GM10248 (cell line): ENCODE measurements at regions of chr20 and their contacts with region 1.

Region 1: GRCh38 chr20:815914-816606 is 17.5 kb upstream of the FAM110A start:
- DNase-seq: peak; percentile 77
- CTCF ChIP-seq: peak; percentile 89

Region 2: DNA sequence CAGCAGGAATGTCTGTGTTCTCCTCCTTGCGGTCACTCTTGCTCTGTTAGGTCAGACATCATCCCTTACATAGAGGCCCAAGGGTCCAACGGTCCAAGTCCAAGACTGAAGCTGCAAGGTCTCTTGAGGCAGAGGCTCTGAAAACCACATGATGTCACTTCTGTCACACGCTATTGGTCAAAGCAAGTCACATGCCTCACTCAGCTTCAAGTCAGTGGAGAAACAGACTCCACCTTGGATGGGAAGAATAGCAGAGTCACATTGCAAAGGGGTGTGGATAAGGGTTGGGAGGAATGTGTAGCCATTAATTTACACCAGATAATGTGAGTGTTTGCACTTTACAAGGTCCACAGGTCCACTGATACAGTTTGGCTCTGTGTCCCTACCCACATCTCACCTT is 65.3 kb before region 1 on chr20:
- CTCF ChIA-PET with region 1: no interaction called
- POLR2A ChIA-PET with region 1: no interaction called
- DNase-seq: no peak
- CTCF ChIP-seq: no peak

Region 3: DNA sequence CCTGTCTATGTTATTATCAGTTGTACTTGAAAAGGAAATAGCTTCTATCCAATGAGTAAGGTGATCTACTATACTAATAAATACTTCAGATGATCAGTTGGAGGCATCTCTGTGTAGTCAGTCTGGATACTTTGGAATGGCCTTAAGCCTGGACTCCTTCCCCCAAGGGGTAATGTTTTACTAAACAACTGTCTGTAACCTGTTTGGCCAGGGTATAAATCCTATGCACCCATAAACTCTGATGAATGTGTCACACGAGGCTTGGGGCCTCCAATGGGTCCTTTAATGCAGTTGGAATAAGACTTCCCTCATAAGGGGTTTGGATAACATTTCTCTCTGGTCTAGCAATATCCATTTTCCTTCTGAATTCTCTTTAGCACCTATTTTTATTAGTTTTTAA is 28.2 kb before region 1 on chr20:
- CTCF ChIA-PET with region 1: no interaction called
- POLR2A ChIA-PET with region 1: no interaction called
- DNase-seq: no peak
- CTCF ChIP-seq: no peak

Region 4: DNA sequence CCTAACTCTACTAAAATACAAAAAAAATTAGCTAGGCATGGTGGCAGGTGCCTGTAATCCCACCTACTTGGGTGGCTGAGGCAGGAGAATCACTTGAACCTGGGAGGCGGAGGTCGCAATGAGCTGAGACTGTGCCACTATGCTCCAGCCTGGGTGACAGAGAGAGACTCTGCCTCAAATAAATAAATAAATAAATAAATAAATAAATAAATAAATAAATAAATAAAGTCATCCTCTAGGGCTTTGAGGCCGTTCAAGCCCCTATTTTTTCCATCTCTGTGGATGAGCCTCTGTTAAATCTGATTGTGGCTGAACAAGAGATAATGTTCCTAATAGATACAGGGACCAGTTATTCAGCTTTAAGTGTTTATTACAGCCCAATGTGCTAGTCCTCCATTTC is 14.4 kb before region 1 on chr20:
- CTCF ChIA-PET with region 1: interaction called, 10 read pairs
- POLR2A ChIA-PET with region 1: no interaction called
- DNase-seq: no peak
- CTCF ChIP-seq: no peak

Region 5: DNA sequence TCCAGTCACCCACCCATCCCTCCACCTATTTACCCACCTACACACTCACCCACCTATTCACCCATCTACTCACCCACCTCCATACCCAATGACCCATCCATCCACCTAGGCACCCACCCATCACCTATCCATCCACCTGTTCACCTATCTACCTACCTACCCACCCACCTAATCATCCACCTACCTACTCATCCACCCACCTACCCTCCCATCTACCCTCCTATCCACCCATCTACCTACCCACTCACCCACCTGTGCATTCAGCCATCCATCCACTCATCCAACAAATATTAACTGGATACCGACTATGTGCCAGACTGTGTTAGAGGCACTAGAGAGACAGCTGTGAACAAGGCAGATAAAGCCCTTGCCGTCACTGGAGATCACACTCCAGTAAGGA is 145.7 kb after region 1 on chr20:
- CTCF ChIA-PET with region 1: interaction called, 231 read pairs
- POLR2A ChIA-PET with region 1: no interaction called
- DNase-seq: no peak
- CTCF ChIP-seq: no peak

Region 6: DNA sequence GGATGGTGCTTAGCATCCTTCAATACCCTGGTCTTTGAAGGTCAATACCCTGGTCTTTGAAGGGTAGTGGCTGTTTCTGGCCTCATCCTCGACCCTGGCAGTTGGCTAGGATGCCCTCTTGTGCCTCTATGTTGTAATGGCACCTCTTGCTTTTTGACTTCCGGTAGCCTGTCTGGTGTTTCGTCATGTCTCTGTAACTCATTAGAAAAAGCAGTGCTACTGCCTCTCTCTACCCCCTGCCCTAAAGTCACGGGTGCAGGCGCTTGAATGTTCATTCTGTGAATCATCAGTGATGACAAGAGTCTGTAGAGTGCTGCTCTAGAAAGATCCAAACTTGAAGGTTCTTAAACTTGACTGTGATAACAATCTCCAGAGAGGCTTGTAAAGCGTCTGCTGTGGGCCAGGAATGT is 157.7 kb after region 1 on chr20:
- CTCF ChIA-PET with region 1: interaction called, 12 read pairs
- POLR2A ChIA-PET with region 1: no interaction called
- DNase-seq: peak; percentile 72
- CTCF ChIP-seq: peak; percentile 44

Region 7: GRCh38 chr20:1108437-1108920 is 292.4 kb after region 1 on chr20:
- CTCF ChIA-PET with region 1: interaction called, 15 read pairs
- POLR2A ChIA-PET with region 1: no interaction called
- DNase-seq: peak; percentile 71
- CTCF ChIP-seq: peak; percentile 83

Region 8: GRCh38 chr20:1212607-1213396 is 396.7 kb after region 1 on chr20:
- CTCF ChIA-PET with region 1: interaction called, 20 read pairs
- POLR2A ChIA-PET with region 1: no interaction called
- DNase-seq: peak; percentile 66
- CTCF ChIP-seq: peak; percentile 91